Breast epithelium (tissue), 4 donors: ENCODE measurements at regions of chr22 and their contacts with region 1.

Region 1: DNA sequence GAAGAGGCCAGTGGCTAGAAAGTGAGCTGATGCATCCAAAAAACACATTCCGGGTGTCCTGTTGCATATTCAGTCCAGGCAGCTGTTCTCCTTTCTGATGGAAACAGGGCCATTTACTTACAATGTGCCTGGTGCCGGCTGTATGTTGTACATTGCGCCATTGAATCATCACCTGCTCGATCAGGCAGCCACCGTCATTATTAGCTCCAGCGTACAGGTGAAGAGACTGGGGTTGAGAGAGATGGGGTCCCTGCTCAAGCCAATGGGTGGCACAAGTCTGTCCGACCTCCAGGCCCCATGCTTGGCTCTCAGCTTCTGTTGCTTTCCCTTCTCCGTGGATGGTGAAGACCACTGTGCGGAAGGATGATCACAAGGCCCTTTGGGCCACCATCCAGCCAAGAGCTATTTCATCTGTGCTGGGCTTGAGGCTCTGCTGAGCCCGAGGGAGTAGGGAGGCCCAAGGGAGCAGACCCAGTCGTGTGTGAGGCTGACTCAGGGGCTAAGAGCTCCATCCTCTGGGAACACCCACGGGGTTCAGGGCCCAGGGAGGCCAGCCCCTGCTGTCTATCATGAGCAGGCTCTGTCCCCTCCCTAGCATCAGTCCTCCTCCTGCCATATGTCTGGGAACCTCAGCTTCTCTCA is 20.7 kb upstream of the EMID1 start:
- DNase-seq: no peak
- H3K4me3 ChIP-seq: no peak overlapping the region
- H3K27ac ChIP-seq: no peak overlapping the region
- H3K4me1 ChIP-seq: no peaks in the 10 kb centered on the region
- H3K27me3 ChIP-seq: no peaks in the 10 kb centered on the region
- CTCF ChIP-seq: no peak
- POLR2A ChIP-seq: no peak

Region 2: DNA sequence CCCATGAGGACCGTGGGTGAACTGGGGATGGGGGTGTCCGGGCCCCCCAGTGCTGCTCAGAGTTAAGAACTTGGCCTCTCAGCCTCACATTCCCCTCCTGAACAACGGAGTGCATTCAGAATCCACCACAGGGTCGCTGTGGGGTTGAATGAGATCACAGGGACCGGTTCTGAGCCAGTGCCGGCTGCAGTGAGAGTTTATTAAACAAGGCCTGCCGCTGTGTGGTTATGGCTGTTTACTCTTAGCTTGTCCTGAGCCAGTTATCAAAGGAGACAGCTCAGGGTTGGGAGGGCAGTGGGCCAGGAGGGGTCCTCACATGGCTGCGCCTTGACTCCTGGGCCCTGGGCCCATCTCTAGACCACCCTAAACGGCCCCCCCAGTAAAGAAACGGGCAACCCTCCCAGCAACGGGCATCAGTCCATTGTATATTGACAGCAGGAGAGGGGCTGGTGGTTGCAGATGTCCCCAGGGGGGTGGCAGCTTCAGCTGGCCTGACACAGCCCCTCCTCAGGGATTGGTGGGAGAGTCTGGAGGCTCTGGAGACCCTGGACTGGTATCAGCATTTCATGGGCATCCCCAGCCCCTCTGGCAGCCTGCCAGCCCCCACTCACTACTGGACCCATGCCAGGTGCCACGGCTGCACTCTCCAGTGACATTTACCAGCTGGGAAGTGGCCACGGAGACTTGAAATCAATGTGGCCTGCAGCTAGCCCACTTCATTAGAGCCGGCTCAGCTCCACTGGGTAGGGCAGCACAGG is 519.7 kb after region 1 on chr22:
- intact Hi-C with region 1: loop called (anchors 5 kb)
- DNase-seq: no peak
- H3K4me3 ChIP-seq: no peak overlapping the region
- H3K27ac ChIP-seq: no peak overlapping the region
- H3K4me1 ChIP-seq: no peaks in the 10 kb centered on the region
- H3K27me3 ChIP-seq: peaks cover 0 to 19% of the 10 kb centered on the region in 2 donors
- CTCF ChIP-seq: no peak
- POLR2A ChIP-seq: no peak

Region 3: DNA sequence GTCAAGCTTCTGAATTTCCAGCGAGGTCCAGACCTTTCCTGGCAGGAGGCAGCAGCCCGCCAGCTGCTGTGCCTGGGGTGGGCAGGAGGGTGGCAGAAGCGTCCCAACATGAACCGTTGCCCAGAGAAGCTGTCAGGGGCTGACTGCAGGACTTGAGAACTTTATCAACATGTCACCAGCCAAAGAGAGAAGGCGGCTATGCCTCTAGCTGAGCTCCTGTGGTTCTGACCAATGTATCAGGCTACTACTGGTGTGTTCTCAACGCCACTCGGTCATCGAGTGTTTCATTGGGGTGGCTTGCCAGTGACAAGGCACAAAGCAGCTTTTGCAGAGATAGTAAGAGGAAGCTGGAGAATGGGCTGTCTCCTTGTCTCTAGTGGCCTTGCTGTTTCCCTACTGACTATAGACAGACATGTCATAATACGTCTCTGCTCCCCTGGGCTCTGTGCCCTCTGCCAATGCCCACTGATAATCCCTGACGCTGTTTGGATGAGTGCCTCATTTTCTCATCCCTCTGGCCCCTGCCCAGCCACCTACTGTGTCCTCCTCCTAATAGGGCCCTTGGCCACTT is 670.7 kb after region 1 on chr22:
- intact Hi-C with region 1: no loop called
- DNase-seq: no peak
- H3K4me3 ChIP-seq: no peak overlapping the region
- H3K27ac ChIP-seq: no peak overlapping the region
- H3K4me1 ChIP-seq: no peaks in the 10 kb centered on the region
- H3K27me3 ChIP-seq: no peaks in the 10 kb centered on the region
- CTCF ChIP-seq: no peak
- POLR2A ChIP-seq: no peak